ENCODE measurements at regions of chr12 and their contacts with region 1.

Region 1: GRCh38 chr12:48197971-48198671 is 5.0 kb downstream of the OR10AD1 start:
- DNase-seq: peak; percentile 84
- ATAC-seq: peak; percentile 98
- H3K4me3 Mint-ChIP-seq: peak overlapping the region; percentile 96
- H3K27ac Mint-ChIP-seq: peak overlapping the region; percentile 99
- H3K4me1 Mint-ChIP-seq: peaks cover 26% of the 10 kb centered on the region
- H3K27me3 Mint-ChIP-seq: peaks cover 17% of the 10 kb centered on the region
- CTCF ChIP-seq: no peak

Region 2: GRCh38 chr12:48350249-48351021 is 152.3 kb after region 1 on chr12 and contains the start of gene ZNF641:
- CTCF ChIA-PET with region 1: no interaction called
- POLR2A ChIA-PET with region 1: interaction called, 4 read pairs
- intact Hi-C with region 1: loop called (anchors 1 kb)
- DNase-seq: peak; percentile 73
- ATAC-seq: peak; percentile 87
- H3K4me3 Mint-ChIP-seq: peak within 1 kb of the TSS; percentile 96
- H3K27ac Mint-ChIP-seq: peak within 1 kb of the TSS; percentile 90
- H3K4me1 Mint-ChIP-seq: peaks cover 25% of the 10 kb centered on the region
- H3K27me3 Mint-ChIP-seq: no peaks in the 10 kb centered on the region
- CTCF ChIP-seq: no peak
- total RNA-seq, gene ZNF641: 27.6 and 34.5 TPM in 2 replicates

Region 3: GRCh38 chr12:48716493-48717251 is 518.6 kb after region 1 on chr12 and contains the start of gene CCNT1:
- CTCF ChIA-PET with region 1: no interaction called
- POLR2A ChIA-PET with region 1: no interaction called
- intact Hi-C with region 1: loop called (anchors 2 kb)
- DNase-seq: peak; percentile 92
- ATAC-seq: peak; percentile 91
- H3K4me3 Mint-ChIP-seq: peak within 1 kb of the TSS; percentile 87
- H3K27ac Mint-ChIP-seq: peak within 1 kb of the TSS; percentile 97
- H3K4me1 Mint-ChIP-seq: peaks cover 39% of the 10 kb centered on the region
- H3K27me3 Mint-ChIP-seq: peaks cover 2% of the 10 kb centered on the region
- CTCF ChIP-seq: no peak
- total RNA-seq, gene CCNT1: 48.9 and 49.6 TPM in 2 replicates